Breast epithelium (tissue), 4 donors: ENCODE measurements at regions of chr19 and their contacts with region 1.

Region 1: GRCh38 chr19:32627714-32628270 is 46.8 kb downstream of the PDCD5 start:
- DNase-seq: no peak
- H3K4me3 ChIP-seq: no peak overlapping the region
- H3K27ac ChIP-seq: no peak overlapping the region
- H3K4me1 ChIP-seq: no peaks in the 10 kb centered on the region
- H3K27me3 ChIP-seq: no peaks in the 10 kb centered on the region
- CTCF ChIP-seq: no peak
- POLR2A ChIP-seq: no peak

Region 2: DNA sequence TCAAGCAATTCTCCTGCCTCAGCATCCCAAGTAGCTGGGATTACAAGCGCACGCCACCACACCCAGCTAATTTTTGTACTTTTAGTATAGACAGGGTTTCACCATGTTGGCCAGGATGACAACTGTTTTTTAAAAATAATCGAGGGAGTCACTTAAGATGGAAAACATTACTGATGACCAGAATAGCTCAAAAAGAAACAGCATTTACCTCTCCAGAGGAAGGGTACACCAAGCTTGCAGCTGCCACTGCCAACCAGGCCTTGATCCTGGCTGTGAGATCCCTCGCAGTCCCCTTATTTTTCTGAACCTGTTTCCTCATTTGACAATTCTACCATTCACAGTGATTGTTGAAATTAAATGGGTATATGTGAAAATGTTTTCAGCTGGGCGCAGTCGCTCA is 32.3 kb before region 1 on chr19:
- intact Hi-C with region 1: no loop called
- DNase-seq: no peak
- H3K4me3 ChIP-seq: no peak overlapping the region
- H3K27ac ChIP-seq: no peak overlapping the region
- H3K4me1 ChIP-seq: no peaks in the 10 kb centered on the region
- H3K27me3 ChIP-seq: no peaks in the 10 kb centered on the region
- CTCF ChIP-seq: no peak
- POLR2A ChIP-seq: no peak

Region 3: GRCh38 chr19:32662186-32662585 is 34.4 kb after region 1 on chr19:
- intact Hi-C with region 1: no loop called
- DNase-seq: no peak
- H3K4me3 ChIP-seq: no peak overlapping the region
- H3K27ac ChIP-seq: no peak overlapping the region
- H3K4me1 ChIP-seq: no peaks in the 10 kb centered on the region
- H3K27me3 ChIP-seq: no peaks in the 10 kb centered on the region
- CTCF ChIP-seq: no peak
- POLR2A ChIP-seq: no peak

Region 4: DNA sequence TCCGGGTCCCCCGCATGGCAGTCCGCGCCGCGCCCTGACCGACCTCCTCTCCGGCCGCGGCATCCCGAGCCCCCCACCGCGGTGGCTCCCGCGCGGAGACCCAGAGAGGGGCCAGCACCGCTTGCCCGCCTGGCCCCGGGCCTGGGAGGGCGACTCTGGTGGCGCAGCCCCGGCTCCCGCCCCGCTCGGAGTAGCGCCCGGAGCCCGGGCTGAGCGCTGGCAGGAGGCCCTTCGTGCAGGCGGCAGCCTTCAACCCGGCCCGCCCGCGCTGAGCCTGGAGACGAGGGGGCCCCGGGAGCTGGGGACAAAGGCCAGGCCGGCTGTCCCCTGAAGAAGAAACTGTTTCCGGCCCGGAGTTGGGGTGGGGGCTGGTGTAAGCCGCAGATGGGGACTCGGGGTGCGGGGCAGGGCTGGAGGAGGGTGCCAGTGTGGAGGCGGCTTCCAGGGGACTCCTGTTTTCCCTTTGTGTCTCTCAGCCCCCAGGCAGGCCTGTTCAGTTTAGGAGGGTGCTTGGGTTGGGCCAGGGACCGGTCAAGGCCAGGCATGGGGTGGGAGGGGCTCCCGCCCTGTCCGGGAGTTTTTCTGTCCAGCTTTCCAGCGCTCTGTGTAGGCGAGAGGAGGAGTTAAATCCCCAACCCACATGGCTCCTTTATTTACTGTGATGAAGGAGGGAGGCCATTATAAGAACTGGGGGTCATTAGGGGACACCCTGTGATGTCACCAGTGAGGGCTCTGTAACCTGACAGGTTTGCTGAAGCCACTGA is 567.3 kb after region 1 on chr19:
- intact Hi-C with region 1: loop called (anchors 5 kb)
- DNase-seq: no peak
- H3K4me3 ChIP-seq: peak overlapping the region; percentile 71 to 97 (median 71)
- H3K27ac ChIP-seq: peak overlapping the region; percentile 63 to 87
- H3K4me1 ChIP-seq: peaks cover 0 to 8% of the 10 kb centered on the region in 2 donors
- H3K27me3 ChIP-seq: no peaks in the 10 kb centered on the region
- CTCF ChIP-seq: no peak
- POLR2A ChIP-seq: no peak